Calu3 (cell line): ENCODE measurements at regions of chr14 and their contacts with region 1.

Region 1: GRCh38 chr14:93939304-93940229 is 12.4 kb downstream of the FAM181A start:
- DNase-seq: peak; percentile 94
- H3K4me3 Mint-ChIP-seq: no peak overlapping the region
- H3K27ac Mint-ChIP-seq: no peak overlapping the region
- H3K4me1 Mint-ChIP-seq: peaks cover 35% of the 10 kb centered on the region
- H3K27me3 Mint-ChIP-seq: peaks cover 12% of the 10 kb centered on the region
- CTCF ChIP-seq: peak; percentile 94

Region 2: GRCh38 chr14:93804646-93805045 is 134.9 kb before region 1 on chr14:
- CTCF ChIA-PET with region 1: no interaction called
- intact Hi-C with region 1: no loop called
- DNase-seq: no peak
- H3K4me3 Mint-ChIP-seq: no peak overlapping the region
- H3K27ac Mint-ChIP-seq: no peak overlapping the region
- H3K4me1 Mint-ChIP-seq: no peaks in the 10 kb centered on the region
- H3K27me3 Mint-ChIP-seq: peaks cover 80% of the 10 kb centered on the region
- CTCF ChIP-seq: no peak

Region 3: DNA sequence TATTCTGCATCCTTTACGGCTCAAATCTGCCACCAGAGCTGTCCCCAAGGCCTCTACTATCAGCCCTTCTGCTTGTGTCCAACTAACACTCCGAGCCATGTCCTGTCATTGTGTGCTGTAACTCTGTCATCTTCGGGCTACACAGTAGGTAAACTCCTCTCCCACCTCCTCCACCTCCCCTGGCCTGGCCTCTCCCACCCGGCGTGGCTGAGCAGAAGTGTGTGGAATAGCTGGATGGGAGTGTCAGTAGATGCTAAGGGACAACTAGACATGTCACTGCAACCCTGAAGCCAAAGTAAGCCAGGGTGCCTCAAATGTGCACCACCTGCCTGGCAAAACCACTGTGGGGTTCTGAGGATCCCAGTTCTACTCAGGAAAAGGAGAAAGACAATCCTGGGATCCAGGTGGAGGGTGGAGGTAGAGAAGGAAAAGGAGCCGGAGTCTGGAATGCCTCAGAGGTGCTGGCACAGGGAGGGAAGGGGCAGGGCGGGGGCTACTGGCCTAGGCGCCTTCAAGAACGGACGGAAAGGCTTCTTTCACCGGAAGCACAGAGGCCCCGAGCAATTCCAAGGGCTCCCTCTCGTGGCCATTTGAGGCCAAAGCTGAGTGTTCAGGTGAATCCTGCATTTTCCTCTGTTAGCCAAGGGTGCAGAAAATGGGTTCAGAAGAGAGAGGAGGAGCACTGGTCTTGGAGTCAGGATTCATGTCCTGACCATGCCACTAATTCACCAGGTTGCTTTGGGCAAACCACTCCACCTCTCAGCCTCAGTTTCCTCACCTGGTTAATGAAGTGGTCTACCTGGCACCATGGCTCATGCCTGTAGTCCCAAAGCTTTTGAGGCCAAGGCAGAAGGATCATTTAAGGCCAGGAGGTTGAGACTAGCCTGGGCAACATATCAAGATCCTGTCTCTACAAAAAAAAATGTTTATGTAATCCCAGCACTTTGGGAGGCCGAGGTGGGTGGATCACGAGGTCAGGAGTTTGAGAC is 32.9 kb before region 1 on chr14:
- CTCF ChIA-PET with region 1: no interaction called
- intact Hi-C with region 1: no loop called
- DNase-seq: peak; percentile 72
- H3K4me3 Mint-ChIP-seq: no peak overlapping the region
- H3K27ac Mint-ChIP-seq: no peak overlapping the region
- H3K4me1 Mint-ChIP-seq: no peaks in the 10 kb centered on the region
- H3K27me3 Mint-ChIP-seq: peaks cover 83% of the 10 kb centered on the region
- CTCF ChIP-seq: peak; percentile 47

Region 4: GRCh38 chr14:93926873-93927799 is 12.4 kb before region 1 on chr14 and contains the start of gene FAM181A:
- CTCF ChIA-PET with region 1: interaction called, 13 read pairs
- intact Hi-C with region 1: no loop called
- DNase-seq: no peak
- H3K4me3 Mint-ChIP-seq: no peak within 1 kb of the TSS
- H3K27ac Mint-ChIP-seq: no peak within 1 kb of the TSS
- H3K4me1 Mint-ChIP-seq: no peaks in the 10 kb centered on the region
- H3K27me3 Mint-ChIP-seq: peaks cover 44% of the 10 kb centered on the region
- CTCF ChIP-seq: no peak
- total RNA-seq, gene FAM181A: not detected in 2 replicates

Region 5: DNA sequence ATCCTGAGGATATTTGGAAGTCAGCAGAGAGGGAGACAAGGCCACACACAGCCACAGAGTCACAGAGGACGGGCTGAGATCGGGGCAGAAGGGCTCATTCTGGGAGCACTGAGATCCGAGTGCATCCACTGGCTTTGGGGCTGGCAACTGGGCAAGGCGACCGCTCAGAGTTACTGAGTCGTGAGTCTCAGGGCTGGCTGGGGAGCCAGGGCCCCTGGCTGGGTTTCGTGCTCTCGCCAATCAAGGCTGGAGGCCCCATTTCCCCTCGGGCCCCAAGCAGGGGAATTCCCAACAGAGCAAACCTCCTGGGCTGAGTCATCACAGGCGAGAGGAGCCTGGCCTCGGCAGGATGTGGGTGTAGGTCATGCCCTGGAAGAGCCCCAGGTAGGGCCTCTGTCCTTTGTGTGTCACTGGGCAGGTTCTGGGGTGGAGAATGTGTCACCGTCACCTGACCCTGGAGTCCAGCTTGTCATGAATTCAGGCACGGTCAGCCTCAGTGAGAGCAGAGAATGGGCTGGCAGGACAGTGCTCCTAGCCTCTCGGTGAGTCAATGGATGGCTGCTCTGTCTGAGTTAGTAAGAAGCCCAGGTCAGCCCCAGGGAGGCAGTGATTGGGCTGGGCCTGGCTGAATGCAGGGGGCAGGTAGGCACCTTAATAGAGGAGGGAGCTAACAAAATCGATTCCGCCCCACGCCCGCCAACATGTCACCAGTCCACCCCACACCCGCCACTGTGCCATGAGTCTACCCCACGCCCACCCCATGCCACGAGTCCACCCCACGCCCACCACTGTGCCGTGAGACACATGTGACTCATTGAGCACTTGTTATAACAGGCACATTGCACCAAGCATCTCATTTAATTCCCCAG is 19.9 kb after region 1 on chr14:
- CTCF ChIA-PET with region 1: interaction called, 16 read pairs
- intact Hi-C with region 1: no loop called
- DNase-seq: peak; percentile 94
- H3K4me3 Mint-ChIP-seq: peak overlapping the region; percentile 48
- H3K27ac Mint-ChIP-seq: peak overlapping the region; percentile 99
- H3K4me1 Mint-ChIP-seq: peaks cover 75% of the 10 kb centered on the region
- H3K27me3 Mint-ChIP-seq: no peaks in the 10 kb centered on the region
- CTCF ChIP-seq: no peak

Region 6: DNA sequence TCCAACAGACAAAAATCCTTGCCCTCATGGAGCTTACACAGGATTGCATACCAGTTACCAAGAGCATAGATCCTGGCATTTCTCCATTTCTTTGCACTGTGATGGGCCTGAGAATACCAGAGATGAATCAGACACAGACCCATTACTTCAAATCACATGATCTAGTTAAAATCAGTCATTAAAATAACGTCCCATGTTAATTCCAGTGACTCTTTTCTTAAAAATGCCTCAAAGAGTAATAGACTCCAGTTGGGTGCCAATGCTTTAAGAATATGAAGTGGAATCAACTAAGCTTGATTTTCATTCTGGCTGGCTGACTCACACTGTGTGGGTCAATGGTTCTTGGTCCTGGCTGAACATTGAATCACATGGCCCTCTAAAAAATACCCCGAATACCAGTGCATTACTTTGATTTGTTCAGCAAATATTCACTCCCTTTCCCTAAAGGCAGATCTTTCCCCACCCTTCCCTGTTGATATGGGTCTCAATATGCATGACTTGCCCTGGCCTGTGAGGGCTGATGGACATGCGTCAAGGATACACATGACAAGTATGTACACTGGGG is 25.8 kb after region 1 on chr14:
- CTCF ChIA-PET with region 1: interaction called, 51 read pairs
- intact Hi-C with region 1: loop called (anchors 1 kb)
- DNase-seq: no peak
- H3K4me3 Mint-ChIP-seq: no peak overlapping the region
- H3K27ac Mint-ChIP-seq: peak overlapping the region; percentile 68
- H3K4me1 Mint-ChIP-seq: peaks cover 51% of the 10 kb centered on the region
- H3K27me3 Mint-ChIP-seq: no peaks in the 10 kb centered on the region
- CTCF ChIP-seq: no peak

Region 7: DNA sequence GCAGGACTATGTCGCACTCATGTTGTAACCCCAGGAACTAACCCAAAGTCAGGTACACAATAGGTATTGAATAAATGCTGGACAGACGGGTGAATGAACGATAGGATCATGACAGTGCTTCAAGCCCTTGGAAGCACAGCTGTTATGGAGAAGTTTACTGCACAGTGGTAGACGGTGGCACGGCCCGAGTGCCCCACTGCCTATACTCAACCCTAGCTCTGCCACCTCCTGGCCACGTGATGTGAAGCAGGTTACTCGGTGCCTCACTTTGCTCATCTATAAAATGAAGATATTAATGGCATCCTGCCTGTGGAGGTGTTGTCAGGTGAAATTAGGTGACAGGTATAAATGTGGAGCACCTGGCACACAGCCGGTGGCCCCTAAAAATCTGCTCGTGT is 31.0 kb after region 1 on chr14:
- CTCF ChIA-PET with region 1: interaction called, 51 read pairs
- intact Hi-C with region 1: loop called (anchors 1 kb)
- DNase-seq: peak; percentile 69
- H3K4me3 Mint-ChIP-seq: peak overlapping the region; percentile 37
- H3K27ac Mint-ChIP-seq: no peak overlapping the region
- H3K4me1 Mint-ChIP-seq: peaks cover 7% of the 10 kb centered on the region
- H3K27me3 Mint-ChIP-seq: peaks cover 5% of the 10 kb centered on the region
- CTCF ChIP-seq: peak; percentile 56

Region 8: GRCh38 chr14:94001501-94002396 is 62.2 kb after region 1 on chr14:
- CTCF ChIA-PET with region 1: interaction called, 29 read pairs
- intact Hi-C with region 1: loop called (anchors 1 kb)
- DNase-seq: peak; percentile 66
- H3K4me3 Mint-ChIP-seq: no peak overlapping the region
- H3K27ac Mint-ChIP-seq: no peak overlapping the region
- H3K4me1 Mint-ChIP-seq: peaks cover 26% of the 10 kb centered on the region
- H3K27me3 Mint-ChIP-seq: no peaks in the 10 kb centered on the region
- CTCF ChIP-seq: peak; percentile 89

Region 9: DNA sequence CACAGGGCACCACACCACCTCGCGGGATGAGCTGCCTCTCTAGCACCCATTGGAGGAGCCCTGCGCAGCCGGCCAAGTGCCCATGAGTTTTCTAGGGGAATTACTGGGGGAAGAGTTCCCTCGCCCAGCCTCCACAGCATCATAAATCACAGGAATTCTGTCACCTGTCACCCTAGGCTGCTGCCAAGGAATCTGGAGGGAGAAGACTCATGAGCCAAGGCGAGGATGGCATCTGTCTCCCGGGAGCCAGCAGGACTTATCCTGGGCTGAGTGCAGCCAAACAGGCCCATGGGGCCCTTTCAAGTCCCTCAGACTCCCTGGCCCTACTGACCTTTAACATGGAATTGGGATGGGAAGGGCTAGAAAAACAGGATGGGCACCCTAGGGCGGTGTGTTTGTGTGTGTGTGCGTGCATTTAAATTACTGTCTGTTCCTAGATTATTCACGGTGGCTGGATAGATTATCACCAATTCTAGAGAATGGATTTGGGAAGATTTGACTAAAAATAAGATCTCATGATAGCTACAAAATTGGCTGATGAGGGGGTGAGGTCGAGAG is 78.8 kb after region 1 on chr14:
- CTCF ChIA-PET with region 1: no interaction called
- intact Hi-C with region 1: no loop called
- DNase-seq: no peak
- H3K4me3 Mint-ChIP-seq: no peak overlapping the region
- H3K27ac Mint-ChIP-seq: no peak overlapping the region
- H3K4me1 Mint-ChIP-seq: peaks cover 59% of the 10 kb centered on the region
- H3K27me3 Mint-ChIP-seq: no peaks in the 10 kb centered on the region
- CTCF ChIP-seq: no peak

Region 10: DNA sequence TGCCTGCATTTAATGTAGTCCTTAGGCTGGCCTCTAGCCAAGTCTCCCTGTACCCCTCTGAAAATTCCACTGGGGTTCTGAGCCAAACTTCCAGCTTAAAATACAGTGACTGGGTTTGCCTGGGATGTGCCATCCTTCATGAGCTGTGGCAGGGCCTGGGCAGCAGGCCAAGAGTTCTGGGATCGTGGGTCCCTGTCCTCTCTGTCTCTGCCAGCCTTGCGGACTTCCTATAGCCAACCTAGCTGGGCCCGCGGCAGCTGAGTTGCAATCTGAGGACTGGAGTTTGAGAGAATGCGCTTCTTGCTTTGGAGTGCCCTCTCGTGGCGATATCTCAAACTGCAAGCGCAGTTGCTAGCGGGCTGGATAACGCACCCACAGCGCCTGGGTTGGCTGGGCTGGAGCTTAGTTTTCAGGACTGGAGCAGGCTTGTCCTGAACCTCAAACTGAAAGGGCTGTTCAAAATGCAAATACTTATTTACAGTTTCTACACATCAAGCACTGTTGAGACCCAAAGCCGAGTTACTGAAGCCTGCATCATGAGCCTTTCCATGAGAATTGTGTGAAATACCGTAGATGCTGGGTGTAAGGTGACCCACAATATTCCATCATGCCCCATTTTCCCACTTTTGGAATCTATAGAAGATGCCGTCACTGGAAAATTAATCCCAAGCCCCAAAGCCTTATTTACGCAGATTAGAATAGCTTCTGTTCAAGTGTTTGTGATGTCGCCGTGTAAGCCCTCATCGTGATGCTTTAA is 197.2 kb after region 1 on chr14:
- CTCF ChIA-PET with region 1: interaction called, 6 read pairs
- intact Hi-C with region 1: loop called (anchors 5 kb)
- DNase-seq: peak; percentile 86
- H3K4me3 Mint-ChIP-seq: no peak overlapping the region
- H3K27ac Mint-ChIP-seq: no peak overlapping the region
- H3K4me1 Mint-ChIP-seq: no peaks in the 10 kb centered on the region
- H3K27me3 Mint-ChIP-seq: peaks cover 14% of the 10 kb centered on the region
- CTCF ChIP-seq: peak; percentile 85